Mammary epithelial cell (primary cell): ENCODE measurements at regions of chr2 and their contacts with region 1.

Region 1: DNA sequence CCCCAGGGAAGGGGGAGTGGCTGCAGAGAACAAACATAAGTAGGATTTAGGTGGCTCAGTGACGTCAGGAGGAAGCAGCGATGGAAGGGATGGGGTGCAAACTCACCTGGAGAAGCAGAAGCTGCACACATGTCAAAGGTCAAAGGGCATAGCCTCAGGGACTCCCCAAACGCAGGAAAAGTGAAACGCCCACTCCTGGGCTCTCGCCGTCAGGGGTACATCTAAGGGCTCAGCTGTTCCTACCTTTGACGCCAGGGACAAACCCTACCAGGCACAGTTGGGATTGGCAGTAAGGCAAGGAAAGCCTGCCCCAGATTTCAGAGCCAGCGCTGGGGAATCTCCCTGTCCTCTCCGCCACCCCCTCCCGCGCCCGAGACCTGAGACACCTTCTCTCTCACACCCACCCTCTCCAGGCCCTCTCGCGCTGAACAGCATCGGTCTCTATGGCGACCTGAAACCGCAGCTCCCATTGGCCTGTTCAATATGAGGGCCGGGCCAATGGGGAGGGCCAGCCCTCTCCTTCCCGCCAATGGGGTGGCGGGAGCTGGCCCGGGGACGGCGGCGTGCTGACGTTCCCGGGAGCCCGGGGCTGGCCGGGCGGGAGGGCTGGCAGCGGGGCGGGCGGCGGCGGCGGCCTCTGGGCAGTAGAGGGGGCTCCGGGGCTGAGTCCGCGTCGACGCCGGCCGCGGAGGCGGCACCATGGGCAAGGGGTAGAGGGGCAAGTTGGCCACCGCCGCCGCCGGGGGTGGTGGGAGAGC is at the starts of genes CCDC148 and PKP4:
- DNase-seq: peak; percentile 94
- H3K4me3 ChIP-seq: peak within 1 kb of the TSS; percentile 77 to 86 (median 86)
- H3K27ac ChIP-seq: peak within 1 kb of the TSS; percentile 74
- H3K4me1 ChIP-seq: peaks cover 22% of the 10 kb centered on the region
- H3K27me3 ChIP-seq: no peaks in the 10 kb centered on the region
- CTCF ChIP-seq: peak in 1 of 2 donors; percentile 23
- total RNA-seq, gene CCDC148: 0.71 to 1.3 TPM
- total RNA-seq, gene PKP4: 64.8 to 82.6 TPM

Region 2: DNA sequence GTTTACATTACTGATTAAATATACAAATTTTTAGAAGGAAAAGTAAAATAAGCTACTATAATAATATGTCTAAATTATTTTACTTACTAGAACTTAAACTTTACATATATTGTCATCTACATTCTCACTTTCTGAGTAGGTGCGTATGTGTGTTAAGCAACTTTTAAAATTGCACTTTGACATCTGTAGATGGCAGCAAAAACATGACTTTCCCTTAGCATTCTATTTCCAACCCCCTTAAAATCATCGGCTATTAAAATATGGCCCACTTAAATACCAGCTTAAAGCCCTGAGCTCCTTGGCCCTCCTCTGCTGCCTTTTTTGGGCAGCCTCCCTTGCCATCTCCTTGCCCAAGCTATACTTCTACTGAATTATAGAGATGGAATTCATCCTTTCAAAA is 276.8 kb before region 1 on chr2:
- CTCF ChIA-PET with region 1: interaction called, 3 read pairs
- dilution Hi-C with region 1: no loop called
- in situ Hi-C with region 1: no loop called
- intact Hi-C with region 1: loop called (anchors 1 kb)
- DNase-seq: no peak
- H3K4me3 ChIP-seq: no peak overlapping the region
- H3K27ac ChIP-seq: no peak overlapping the region
- H3K4me1 ChIP-seq: no peaks in the 10 kb centered on the region
- H3K27me3 ChIP-seq: no peaks in the 10 kb centered on the region
- CTCF ChIP-seq: peak; percentile 34 to 53

Region 3: DNA sequence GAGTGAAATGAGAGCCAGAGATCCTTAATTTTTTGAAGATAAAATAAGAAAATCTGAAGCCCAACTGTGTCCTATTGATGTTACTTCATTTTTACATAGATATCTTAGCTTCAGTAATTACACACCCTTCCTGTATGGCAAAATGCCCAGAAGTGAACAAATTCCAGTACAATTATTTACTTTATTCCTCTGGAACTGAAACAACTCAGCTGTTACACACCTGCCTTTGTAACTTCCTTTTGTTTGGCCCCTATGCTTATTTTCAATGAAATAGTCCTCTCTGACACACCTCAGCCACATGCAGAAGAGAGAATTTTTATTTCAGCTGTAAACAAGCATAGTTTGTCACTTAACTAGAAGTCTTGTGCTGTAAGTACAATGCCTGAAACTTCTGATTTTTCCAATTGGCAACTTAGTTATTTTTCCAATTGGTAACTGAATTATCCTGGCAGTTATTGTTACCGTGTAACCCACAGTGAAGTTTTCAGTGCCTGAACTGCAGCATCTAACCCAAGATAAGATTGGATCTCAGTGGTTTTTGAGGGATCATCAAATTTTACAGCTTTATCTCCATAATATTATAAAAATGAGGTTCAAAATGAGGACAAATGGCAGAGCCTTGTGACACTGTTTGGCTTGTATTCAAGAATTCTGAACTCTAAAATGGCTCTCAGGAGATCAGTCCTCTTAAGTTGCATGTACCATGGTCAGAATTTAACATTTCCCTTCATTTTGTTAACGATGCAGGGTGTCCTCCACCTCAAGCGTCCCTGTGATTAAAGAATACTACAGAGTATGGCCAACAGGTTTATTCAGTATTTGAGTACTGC is 82.9 kb after region 1 on chr2:
- CTCF ChIA-PET with region 1: no interaction called
- dilution Hi-C with region 1: no loop called
- in situ Hi-C with region 1: no loop called
- intact Hi-C with region 1: loop called (anchors 5 kb)
- DNase-seq: peak; percentile 83
- H3K4me3 ChIP-seq: no peak overlapping the region
- H3K27ac ChIP-seq: peak overlapping the region; percentile 34
- H3K4me1 ChIP-seq: peaks cover 16% of the 10 kb centered on the region
- H3K27me3 ChIP-seq: no peaks in the 10 kb centered on the region
- CTCF ChIP-seq: no peak

Region 4: GRCh38 chr2:158619496-158619895 is 163.0 kb after region 1 on chr2:
- CTCF ChIA-PET with region 1: interaction called, 5 read pairs
- dilution Hi-C with region 1: no loop called
- in situ Hi-C with region 1: no loop called
- intact Hi-C with region 1: loop called (anchors 2 kb)
- DNase-seq: peak; percentile 73
- H3K4me3 ChIP-seq: no peak overlapping the region
- H3K27ac ChIP-seq: peak overlapping the region; percentile 44
- H3K4me1 ChIP-seq: peaks cover 15% of the 10 kb centered on the region
- H3K27me3 ChIP-seq: no peaks in the 10 kb centered on the region
- CTCF ChIP-seq: no peak